GM23248 (cell line): ENCODE measurements at regions of chr3 and their contacts with region 1.

Region 1: DNA sequence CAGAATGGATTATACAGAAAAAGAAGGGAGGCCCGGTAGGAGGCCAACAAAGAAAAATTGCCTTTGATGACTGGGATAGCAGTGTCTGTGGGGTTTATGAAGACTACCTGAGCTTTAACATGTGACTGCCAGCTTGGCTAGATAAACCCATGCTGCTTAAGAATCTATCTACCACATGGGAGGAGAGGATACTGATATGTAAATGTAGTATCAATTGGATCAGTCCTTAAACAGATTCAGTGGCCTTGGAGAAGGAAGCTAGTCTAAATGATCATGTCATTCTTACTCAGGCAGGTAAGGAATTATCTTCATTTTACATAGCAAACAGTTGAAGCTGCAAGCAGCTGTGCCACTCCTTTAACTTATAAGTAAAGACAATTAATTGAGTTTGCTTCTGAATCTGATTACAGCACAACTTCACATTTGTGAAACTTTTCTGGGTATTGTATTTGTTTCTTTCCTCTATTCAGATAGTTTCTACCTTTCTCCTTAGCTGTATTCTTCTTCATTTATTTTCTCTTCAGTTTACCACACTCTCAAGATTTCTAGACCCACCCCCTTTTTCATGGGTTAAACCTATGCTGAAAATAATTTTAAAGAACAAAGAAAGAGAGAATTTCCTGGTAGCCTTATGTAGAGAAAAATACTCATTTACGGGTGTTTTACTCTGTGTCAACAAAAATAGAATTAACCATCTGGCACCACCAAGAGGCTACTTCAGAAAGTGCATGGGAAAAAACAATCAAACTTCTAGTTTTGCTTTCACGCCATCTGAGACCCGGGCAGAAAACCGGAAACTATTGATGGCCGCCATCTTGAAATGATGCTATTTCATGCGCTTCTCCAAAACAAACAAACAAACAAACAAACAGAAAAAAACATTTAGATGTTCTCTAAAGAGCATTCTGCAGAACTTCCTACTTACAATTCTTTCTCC is 49.8 kb upstream of the SYNPR start:
- DNase-seq: peak; percentile 81
- H3K4me3 ChIP-seq: peak overlapping the region; percentile 49; the same call in 1 of the 2 replicates
- H3K27ac ChIP-seq: no peak overlapping the region
- H3K4me1 ChIP-seq: no peaks in the 10 kb centered on the region
- H3K27me3 ChIP-seq: no peaks in the 10 kb centered on the region

Region 2: GRCh38 chr3:62665598-62666437 is 562.5 kb before region 1 on chr3:
- in situ Hi-C with region 1: loop called (anchors 10 kb)
- DNase-seq: peak; percentile 79
- H3K4me3 ChIP-seq: peak overlapping the region; percentile 45; the same call in 1 of the 2 replicates
- H3K27ac ChIP-seq: no peak overlapping the region
- H3K4me1 ChIP-seq: no peaks in the 10 kb centered on the region
- H3K27me3 ChIP-seq: no peaks in the 10 kb centered on the region